PC-9 (cell line): ENCODE measurements at regions of chr11 and their contacts with region 1.

Region 1: DNA sequence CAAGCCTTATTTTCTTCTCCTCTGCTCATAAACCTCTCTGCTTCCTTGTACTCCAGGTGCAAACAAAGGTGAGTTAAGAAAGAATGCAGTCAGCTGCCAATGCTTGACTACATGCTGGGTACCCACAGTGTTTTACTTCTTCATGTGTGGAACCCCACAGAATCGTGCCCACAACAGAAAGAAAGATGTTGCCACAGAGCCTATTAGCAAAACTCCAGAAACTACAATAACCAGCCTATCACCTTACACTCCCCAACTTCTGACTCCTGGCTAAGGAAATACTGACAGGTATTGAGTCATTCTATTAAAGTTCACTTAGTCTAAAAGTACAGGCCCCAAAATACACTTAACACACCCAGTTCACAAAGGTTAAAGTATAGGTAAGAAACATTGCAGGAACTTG is 56.9 kb upstream of the CCDC89 start:
- DNase-seq: peak; percentile 35 to 99
- H3K4me3 ChIP-seq: no peak overlapping the region
- H3K27ac ChIP-seq: peak overlapping the region; percentile 97
- H3K4me1 ChIP-seq: peaks cover 72% of the 10 kb centered on the region
- H3K27me3 ChIP-seq: no peaks in the 10 kb centered on the region
- CTCF ChIP-seq: no peak

Region 2: GRCh38 chr11:85540635-85541205 is 202.2 kb before region 1 on chr11:
- CTCF ChIA-PET with region 1: no interaction called
- POLR2A ChIA-PET with region 1: no interaction called
- intact Hi-C with region 1: no loop called
- DNase-seq: no peak
- H3K4me3 ChIP-seq: no peak overlapping the region
- H3K27ac ChIP-seq: no peak overlapping the region
- H3K4me1 ChIP-seq: no peaks in the 10 kb centered on the region
- H3K27me3 ChIP-seq: no peaks in the 10 kb centered on the region
- CTCF ChIP-seq: no peak

Region 3: GRCh38 chr11:85787809-85788805 is 45.2 kb after region 1 on chr11:
- CTCF ChIA-PET with region 1: no interaction called
- POLR2A ChIA-PET with region 1: no interaction called
- intact Hi-C with region 1: loop called (anchors 1 kb)
- DNase-seq: peak; percentile 36 to 99
- H3K4me3 ChIP-seq: no peak overlapping the region; the same call in 1 of the 2 replicates
- H3K27ac ChIP-seq: peak overlapping the region; percentile 83
- H3K4me1 ChIP-seq: peaks cover 55% of the 10 kb centered on the region
- H3K27me3 ChIP-seq: no peaks in the 10 kb centered on the region
- CTCF ChIP-seq: no peak